ENCODE measurements at regions of chr11 and their contacts with region 1.

Region 1: DNA sequence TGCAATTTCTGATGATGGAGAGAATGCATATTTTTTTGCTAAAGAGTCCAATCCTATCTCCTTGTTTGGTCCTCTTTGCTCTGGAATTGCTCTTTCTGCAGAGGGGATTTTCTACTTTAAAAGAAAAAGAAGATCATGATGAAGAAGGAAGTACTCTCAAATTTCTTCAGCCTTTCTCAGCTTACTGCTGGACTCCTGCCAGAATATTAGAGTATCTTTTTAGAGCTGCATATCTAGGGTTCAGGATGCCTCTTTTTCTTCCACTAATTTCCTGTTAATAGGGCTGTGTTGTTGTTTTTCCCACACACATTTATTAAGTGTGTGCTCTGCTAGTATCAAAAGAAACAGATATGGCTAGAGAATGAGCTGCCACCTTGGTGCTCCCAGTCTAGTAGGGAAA is 18.2 kb downstream of the UBASH3B start:
- DNase-seq: no peak
- H3K4me3 ChIP-seq: no peak overlapping the region
- H3K27ac ChIP-seq: peak overlapping the region; percentile 26
- H3K4me1 ChIP-seq: peaks cover 76% of the 10 kb centered on the region
- CTCF ChIP-seq: no peak

Region 2: GRCh38 chr11:122637541-122637940 is 36.2 kb before region 1 on chr11:
- CTCF ChIA-PET with region 1: interaction called, 5 read pairs
- POLR2A ChIA-PET with region 1: interaction called, 10 read pairs
- intact Hi-C with region 1: no loop called
- DNase-seq: peak; percentile 35
- H3K4me3 ChIP-seq: no peak overlapping the region
- H3K27ac ChIP-seq: no peak overlapping the region
- H3K4me1 ChIP-seq: peaks cover 26% of the 10 kb centered on the region
- CTCF ChIP-seq: no peak

Region 3: GRCh38 chr11:122661182-122661945 is 12.3 kb before region 1 on chr11:
- CTCF ChIA-PET with region 1: interaction called, 7 read pairs
- POLR2A ChIA-PET with region 1: interaction called, 58 read pairs
- intact Hi-C with region 1: no loop called
- DNase-seq: no peak
- H3K4me3 ChIP-seq: no peak overlapping the region
- H3K27ac ChIP-seq: no peak overlapping the region
- H3K4me1 ChIP-seq: peaks cover 94% of the 10 kb centered on the region
- CTCF ChIP-seq: no peak

Region 4: DNA sequence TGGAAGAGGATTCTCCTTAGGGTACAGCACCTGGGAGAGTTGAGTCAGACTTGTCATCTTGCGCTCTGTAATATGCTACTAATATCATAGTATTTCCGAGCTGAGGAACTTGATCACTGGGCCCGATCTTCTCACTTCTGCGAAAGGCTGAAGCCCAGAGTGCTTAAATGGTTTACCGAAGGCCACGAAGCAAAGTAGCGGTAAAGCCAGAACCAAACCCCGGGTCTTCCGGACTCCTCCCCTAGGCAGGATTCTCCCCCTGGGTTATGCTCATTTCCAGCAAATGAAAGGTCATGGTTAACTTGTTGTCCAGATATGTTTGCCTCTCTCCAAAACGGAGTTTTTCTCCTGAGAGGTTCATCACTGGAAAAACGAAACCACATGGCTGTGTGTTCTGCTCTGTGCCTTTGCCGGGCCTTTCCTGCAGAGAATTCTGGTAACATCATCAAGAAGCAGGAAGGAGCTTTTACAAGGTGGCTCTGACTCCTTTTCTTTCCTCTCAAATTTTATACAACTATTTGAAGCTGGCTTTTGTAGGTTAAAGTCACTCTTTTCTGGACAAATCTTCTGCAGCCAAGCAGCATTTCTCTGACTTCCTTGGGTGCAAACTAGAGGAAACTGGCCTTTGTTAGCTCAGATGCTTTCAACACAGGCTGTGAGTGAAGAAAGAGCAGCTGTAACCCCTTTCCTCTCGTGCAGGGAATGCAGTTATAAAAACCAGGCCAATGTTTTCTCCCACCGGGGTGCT is 17.3 kb after region 1 on chr11:
- CTCF ChIA-PET with region 1: interaction called, 5 read pairs
- POLR2A ChIA-PET with region 1: interaction called, 175 read pairs
- intact Hi-C with region 1: loop called (anchors 1 kb)
- DNase-seq: peak; percentile 75
- H3K4me3 ChIP-seq: peak overlapping the region; percentile 7
- H3K27ac ChIP-seq: peak overlapping the region; percentile 99
- H3K4me1 ChIP-seq: peaks cover 87% of the 10 kb centered on the region
- CTCF ChIP-seq: no peak

Measured in OCI-LY7 (cell line).